Activated CD4-positive, alpha-beta memory T cell treated with anti-CD3 and anti-CD28 coated beads for 36 hours (primary cell): ENCODE measurements at regions of chr2 and their contacts with region 1.

Region 1: GRCh38 chr2:23384551-23385349 is at the start of gene KLHL29:
- DNase-seq: peak; percentile 70
- H3K4me3 Mint-ChIP-seq: peak within 1 kb of the TSS; percentile 42
- H3K27ac Mint-ChIP-seq: no peak within 1 kb of the TSS
- H3K4me1 Mint-ChIP-seq: peaks cover 27% of the 10 kb centered on the region
- H3K27me3 Mint-ChIP-seq: peaks cover 55% of the 10 kb centered on the region
- total RNA-seq, gene KLHL29: 0.88 to 0.99 TPM

Region 2: DNA sequence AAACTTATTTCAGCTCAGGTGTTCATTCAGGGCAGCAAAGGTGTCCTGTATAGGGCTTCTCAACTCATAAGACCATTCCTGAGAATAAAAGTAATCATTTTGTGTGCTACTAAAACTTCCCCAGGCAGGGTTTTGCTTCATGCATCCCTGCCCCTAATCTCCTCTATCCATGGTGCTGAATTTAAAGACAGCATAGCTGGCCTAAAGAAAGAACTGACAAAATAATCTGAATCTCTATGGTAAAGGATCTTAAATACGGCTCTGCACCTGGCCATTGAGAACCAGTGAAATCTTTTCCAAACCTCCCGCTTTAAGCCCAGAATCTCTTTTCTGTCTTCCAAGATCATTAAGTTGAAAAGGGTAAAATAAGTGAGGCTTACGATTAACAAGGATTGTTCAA is 291.9 kb before region 1 on chr2:
- CTCF ChIA-PET with region 1: no interaction called
- POLR2A ChIA-PET with region 1: no interaction called
- intact Hi-C with region 1: no loop called
- DNase-seq: no peak
- H3K4me3 Mint-ChIP-seq: no peak overlapping the region
- H3K27ac Mint-ChIP-seq: no peak overlapping the region
- H3K4me1 Mint-ChIP-seq: no peaks in the 10 kb centered on the region
- H3K27me3 Mint-ChIP-seq: no peaks in the 10 kb centered on the region

Region 3: DNA sequence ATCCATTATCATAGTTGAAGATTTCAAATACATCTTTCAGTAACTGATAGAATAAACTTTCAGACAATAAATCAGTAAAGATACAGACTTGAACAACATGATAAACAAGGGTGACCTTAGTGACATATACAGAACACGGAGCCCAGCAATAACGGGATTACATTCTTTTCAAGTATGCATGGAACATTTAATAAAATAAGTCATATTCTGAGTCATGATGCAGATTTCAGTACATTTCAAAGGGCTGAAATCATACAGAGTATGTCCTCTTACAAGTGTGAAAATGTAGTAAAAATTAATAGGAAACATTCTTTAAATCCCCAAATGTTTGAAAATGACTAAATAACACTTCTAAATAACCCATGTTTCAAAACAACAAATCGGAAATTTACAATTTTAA is 17.0 kb before region 1 on chr2:
- CTCF ChIA-PET with region 1: no interaction called
- POLR2A ChIA-PET with region 1: no interaction called
- intact Hi-C with region 1: no loop called
- DNase-seq: no peak
- H3K4me3 Mint-ChIP-seq: no peak overlapping the region
- H3K27ac Mint-ChIP-seq: no peak overlapping the region
- H3K4me1 Mint-ChIP-seq: no peaks in the 10 kb centered on the region
- H3K27me3 Mint-ChIP-seq: peaks cover 19% of the 10 kb centered on the region

Region 4: DNA sequence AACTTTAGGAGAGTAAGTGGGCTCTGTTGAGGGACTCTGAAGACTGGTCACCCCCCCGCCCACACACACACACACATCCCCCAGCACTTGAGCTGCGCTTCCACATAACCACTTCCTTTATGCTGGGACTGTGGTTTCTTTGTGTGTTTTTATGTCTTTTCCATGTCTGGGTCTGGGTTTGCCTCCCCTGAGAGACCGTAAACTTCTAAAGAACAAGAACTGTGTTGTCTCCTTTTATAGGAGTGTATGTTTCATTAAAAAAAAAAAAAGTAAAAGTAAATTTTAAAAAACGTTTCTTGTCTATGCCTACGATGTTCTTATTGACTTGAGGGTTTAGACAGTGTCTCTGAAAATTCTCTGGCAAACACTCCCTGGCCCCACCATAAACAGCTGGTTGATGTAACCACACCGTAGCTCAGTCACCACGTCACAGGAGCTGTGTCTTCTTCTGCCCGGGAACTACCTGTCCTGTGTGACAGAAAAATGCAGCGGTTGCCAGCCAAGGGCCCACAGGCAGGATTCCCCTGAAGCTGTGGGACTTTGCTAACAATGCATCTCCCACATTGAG is 68.2 kb after region 1 on chr2:
- CTCF ChIA-PET with region 1: no interaction called
- POLR2A ChIA-PET with region 1: no interaction called
- intact Hi-C with region 1: loop called (anchors 5 kb)
- DNase-seq: peak; percentile 32
- H3K4me3 Mint-ChIP-seq: peak overlapping the region; percentile 26
- H3K27ac Mint-ChIP-seq: no peak overlapping the region
- H3K4me1 Mint-ChIP-seq: peaks cover 15% of the 10 kb centered on the region
- H3K27me3 Mint-ChIP-seq: no peaks in the 10 kb centered on the region

Region 5: DNA sequence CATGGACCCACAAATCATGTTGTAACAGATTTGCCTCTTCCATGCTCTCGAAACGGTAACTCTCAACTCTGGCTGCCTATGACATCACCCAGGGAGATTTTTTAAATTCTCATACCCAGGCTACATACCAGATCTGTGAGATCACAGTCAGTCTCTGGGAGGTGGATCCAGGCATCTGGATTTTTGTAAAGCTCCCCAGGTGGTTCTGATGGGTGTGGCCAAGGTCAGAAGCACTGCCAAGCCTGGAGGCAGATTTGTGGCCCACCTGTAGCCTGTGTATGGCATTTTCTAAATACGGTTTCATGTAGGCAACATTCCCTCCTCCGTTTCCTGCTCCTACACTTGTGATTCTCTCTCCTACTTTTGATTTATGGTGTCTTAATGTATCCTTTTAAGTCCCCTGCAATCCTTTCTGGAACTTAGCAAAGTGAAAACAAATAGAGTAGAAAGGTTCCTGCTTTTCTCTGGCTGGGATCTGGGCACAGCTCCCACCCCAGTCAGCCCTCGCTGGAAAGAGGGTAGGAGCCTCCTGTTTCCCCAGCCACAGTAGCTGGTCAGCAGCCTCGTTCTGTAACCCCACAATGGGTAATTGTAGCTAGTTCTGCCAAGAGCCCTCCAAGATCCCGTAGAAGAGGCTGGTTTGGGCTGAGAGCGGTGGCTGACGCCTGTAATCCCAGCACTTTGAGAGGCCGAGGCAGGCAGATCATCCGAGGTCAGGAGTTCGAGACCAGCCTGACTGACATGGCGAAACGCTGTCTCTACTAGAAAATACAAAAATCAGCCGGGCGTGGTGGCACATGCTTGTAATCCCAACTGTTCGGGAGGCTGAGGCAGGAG is 96.5 kb after region 1 on chr2:
- CTCF ChIA-PET with region 1: no interaction called
- POLR2A ChIA-PET with region 1: no interaction called
- intact Hi-C with region 1: no loop called
- DNase-seq: no peak
- H3K4me3 Mint-ChIP-seq: no peak overlapping the region
- H3K27ac Mint-ChIP-seq: no peak overlapping the region
- H3K4me1 Mint-ChIP-seq: no peaks in the 10 kb centered on the region
- H3K27me3 Mint-ChIP-seq: no peaks in the 10 kb centered on the region

Region 6: GRCh38 chr2:23566236-23567142 is 181.7 kb after region 1 on chr2:
- CTCF ChIA-PET with region 1: no interaction called
- POLR2A ChIA-PET with region 1: no interaction called
- intact Hi-C with region 1: loop called (anchors 10 kb)
- DNase-seq: peak; percentile 49
- H3K4me3 Mint-ChIP-seq: no peak overlapping the region
- H3K27ac Mint-ChIP-seq: no peak overlapping the region
- H3K4me1 Mint-ChIP-seq: no peaks in the 10 kb centered on the region
- H3K27me3 Mint-ChIP-seq: no peaks in the 10 kb centered on the region